ENCODE measurements at regions of chr9 and their contacts with region 1.

Region 1: GRCh38 chr9:71830929-71831328 is 62.6 kb upstream of the CEMIP2 start:
- DNase-seq: no peak
- ATAC-seq: no peak
- H3K4me3 Mint-ChIP-seq: no peak overlapping the region
- H3K27ac Mint-ChIP-seq: no peak overlapping the region
- H3K4me1 Mint-ChIP-seq: no peaks in the 10 kb centered on the region
- H3K27me3 Mint-ChIP-seq: peaks cover 12% of the 10 kb centered on the region

Region 2: GRCh38 chr9:71819115-71819739 is 11.7 kb before region 1 on chr9:
- CTCF ChIA-PET with region 1: interaction called, 10 read pairs
- DNase-seq: no peak
- ATAC-seq: no peak
- H3K4me3 Mint-ChIP-seq: no peak overlapping the region
- H3K27ac Mint-ChIP-seq: no peak overlapping the region
- H3K4me1 Mint-ChIP-seq: peaks cover 9% of the 10 kb centered on the region
- H3K27me3 Mint-ChIP-seq: no peaks in the 10 kb centered on the region

Region 3: GRCh38 chr9:71885467-71885866 is 54.5 kb after region 1 on chr9:
- CTCF ChIA-PET with region 1: no interaction called
- DNase-seq: no peak
- ATAC-seq: no peak
- H3K4me3 Mint-ChIP-seq: no peak overlapping the region
- H3K27ac Mint-ChIP-seq: no peak overlapping the region
- H3K4me1 Mint-ChIP-seq: peaks cover 30% of the 10 kb centered on the region
- H3K27me3 Mint-ChIP-seq: no peaks in the 10 kb centered on the region

Measured in activated CD8-positive, alpha-beta memory T cell treated with anti-CD3 and anti-CD28 coated beads, Interleukin-2, amount 10 ng/mL, durations not matched to agents 7 days and 5 days (primary cell).